Activated CD8-positive, alpha-beta T cell treated with anti-CD3 and anti-CD28 coated beads, Interleukin-2, amount 10 ng/mL, durations not matched to agents 7 days and 5 days (primary cell): ENCODE measurements at regions of chr9 and their contacts with region 1.

Region 1: GRCh38 chr9:109956717-109957440 is 176.9 kb downstream of the PALM2AKAP2 start:
- DNase-seq: no peak
- ATAC-seq: no peak
- H3K4me3 Mint-ChIP-seq: no peak overlapping the region
- H3K27ac Mint-ChIP-seq: no peak overlapping the region
- H3K4me1 Mint-ChIP-seq: peaks cover 22% of the 10 kb centered on the region
- H3K27me3 Mint-ChIP-seq: peaks cover 16% of the 10 kb centered on the region

Region 2: DNA sequence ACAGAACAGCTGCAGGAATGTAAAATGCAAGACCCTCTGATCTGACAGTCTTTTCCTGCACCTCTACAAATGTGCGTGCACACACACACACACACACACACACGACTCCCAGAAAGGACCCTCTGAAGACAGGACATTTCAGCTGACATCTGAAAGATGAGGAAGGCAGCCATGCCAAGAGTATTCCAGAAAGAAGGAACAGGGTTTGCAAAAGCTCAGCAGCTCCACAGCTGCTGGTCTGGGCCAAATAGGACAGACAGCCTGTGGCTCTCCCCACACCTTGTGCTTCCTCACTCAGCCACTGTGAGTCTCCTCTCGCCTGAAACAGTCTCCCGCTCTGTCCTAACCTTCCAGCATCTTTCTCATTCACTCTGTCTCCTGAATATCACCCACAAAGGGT is 12.1 kb after region 1 on chr9:
- CTCF ChIA-PET with region 1: interaction called, 16 read pairs
- POLR2A ChIA-PET with region 1: no interaction called
- DNase-seq: no peak
- ATAC-seq: peak; percentile 38
- H3K4me3 Mint-ChIP-seq: no peak overlapping the region
- H3K27ac Mint-ChIP-seq: peak overlapping the region; percentile 73
- H3K4me1 Mint-ChIP-seq: peaks cover 47% of the 10 kb centered on the region
- H3K27me3 Mint-ChIP-seq: peaks cover 18% of the 10 kb centered on the region